ENCODE measurements at regions of chr19 and their contacts with region 1.

Region 1: DNA sequence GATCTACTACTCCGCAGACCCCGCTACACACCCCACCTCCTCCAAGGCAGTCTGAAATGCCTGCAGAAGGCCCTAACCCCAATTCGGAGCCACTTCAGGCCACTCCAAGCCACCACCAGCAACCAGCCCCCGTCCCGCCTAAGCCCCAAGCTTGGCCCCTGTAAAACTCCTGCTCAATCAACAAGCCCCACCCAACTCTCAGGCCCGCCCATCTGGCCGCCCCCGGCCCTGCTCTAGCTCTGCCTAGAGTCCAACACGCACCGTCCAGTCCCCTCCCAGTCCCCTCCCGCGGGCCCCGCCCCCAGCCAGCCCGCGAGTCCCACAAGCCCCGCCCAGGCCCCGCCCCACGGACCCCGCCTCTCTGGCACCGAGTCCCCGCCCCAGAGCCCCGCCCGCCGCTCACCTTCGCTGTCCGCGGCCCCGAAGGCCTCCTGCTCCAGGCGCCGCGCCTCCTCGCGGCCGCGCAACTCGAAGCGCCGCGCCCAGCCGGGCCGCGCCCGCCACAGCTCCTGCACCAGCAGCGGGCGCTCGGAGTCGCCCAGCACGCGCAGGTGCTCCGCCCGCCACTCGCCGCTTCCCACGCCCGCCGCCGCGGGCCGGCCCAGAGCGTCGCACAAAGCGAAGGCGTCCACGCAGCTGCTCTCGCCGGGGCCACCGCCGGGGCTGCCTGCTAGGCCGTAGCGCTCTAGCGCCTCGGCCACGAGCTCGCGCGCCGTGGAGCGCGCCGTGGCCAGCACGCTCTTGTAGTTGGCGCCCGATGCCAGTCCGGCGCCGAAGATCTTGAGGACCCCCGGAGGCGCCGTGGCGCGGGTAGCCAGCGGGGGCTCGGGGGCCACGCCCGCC is 1.6 kb downstream of the RASIP1 start:
- DNase-seq: peak; percentile 99
- ATAC-seq: peak; percentile 96
- H3K4me3 Mint-ChIP-seq: peak overlapping the region; percentile 51
- H3K27ac Mint-ChIP-seq: peak overlapping the region; percentile 51
- H3K4me1 Mint-ChIP-seq: peaks cover 17% of the 10 kb centered on the region
- H3K27me3 Mint-ChIP-seq: peaks cover 3% of the 10 kb centered on the region

Region 2: DNA sequence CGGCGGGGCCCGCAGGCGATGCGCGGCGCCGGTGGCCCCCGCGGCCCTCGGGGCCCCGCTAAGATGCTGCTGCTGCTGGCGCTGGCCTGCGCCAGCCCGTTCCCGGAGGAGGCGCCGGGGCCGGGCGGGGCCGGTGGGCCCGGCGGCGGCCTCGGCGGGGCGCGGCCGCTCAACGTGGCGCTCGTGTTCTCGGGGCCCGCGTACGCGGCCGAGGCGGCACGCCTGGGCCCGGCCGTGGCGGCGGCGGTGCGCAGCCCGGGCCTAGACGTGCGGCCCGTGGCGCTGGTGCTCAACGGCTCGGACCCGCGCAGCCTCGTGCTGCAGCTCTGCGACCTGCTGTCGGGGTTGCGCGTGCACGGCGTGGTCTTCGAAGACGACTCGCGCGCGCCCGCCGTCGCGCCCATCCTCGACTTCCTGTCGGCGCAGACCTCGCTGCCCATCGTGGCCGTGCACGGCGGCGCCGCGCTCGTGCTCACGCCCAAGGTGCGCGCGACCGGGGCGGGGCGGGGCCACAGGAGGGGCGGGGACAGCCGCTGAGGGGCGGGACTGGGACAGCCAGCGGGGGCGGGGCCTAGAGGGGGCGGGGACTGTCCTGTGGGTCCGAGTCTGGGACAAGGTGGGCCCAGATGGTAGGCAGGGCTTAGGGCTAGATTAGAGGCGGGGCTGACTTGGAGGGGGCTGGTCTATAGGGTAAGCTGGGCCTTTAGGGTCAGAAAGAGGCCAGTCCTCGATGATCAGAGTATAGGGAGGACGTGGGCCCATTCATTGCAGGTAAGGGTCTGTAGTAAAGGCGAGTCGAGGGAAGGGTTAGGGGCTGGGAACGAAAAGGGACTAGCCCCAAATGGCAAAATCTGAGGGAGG is 340.2 kb before region 1 on chr19:
- CTCF ChIA-PET with region 1: no interaction called
- POLR2A ChIA-PET with region 1: no interaction called
- intact Hi-C with region 1: loop called in 1 of 2 experiments (anchors 2 kb)
- DNase-seq: peak; percentile 94
- ATAC-seq: peak; percentile 68
- H3K4me3 Mint-ChIP-seq: peak overlapping the region; percentile 83
- H3K27ac Mint-ChIP-seq: no peak overlapping the region
- H3K4me1 Mint-ChIP-seq: peaks cover 29% of the 10 kb centered on the region
- H3K27me3 Mint-ChIP-seq: peaks cover 31% of the 10 kb centered on the region

Region 3: GRCh38 chr19:48646001-48646721 is 92.6 kb before region 1 on chr19 and contains the start of gene CA11:
- CTCF ChIA-PET with region 1: interaction called, 4 read pairs
- POLR2A ChIA-PET with region 1: no interaction called
- intact Hi-C with region 1: loop called in 1 of 2 experiments (anchors 1 kb)
- DNase-seq: peak; percentile 96
- ATAC-seq: peak; percentile 85
- H3K4me3 Mint-ChIP-seq: peak within 1 kb of the TSS; percentile 79
- H3K27ac Mint-ChIP-seq: peak within 1 kb of the TSS; percentile 88
- H3K4me1 Mint-ChIP-seq: peaks cover 44% of the 10 kb centered on the region
- H3K27me3 Mint-ChIP-seq: no peaks in the 10 kb centered on the region
- total RNA-seq, gene CA11: 11.5 to 18.0 TPM

Region 4: GRCh38 chr19:48720613-48721296 is 18.0 kb before region 1 on chr19:
- CTCF ChIA-PET with region 1: interaction called, 12 read pairs
- POLR2A ChIA-PET with region 1: interaction called, 4 read pairs
- intact Hi-C with region 1: loop called (anchors 1 to 2 kb)
- DNase-seq: peak; percentile 97
- ATAC-seq: peak; percentile 96
- H3K4me3 Mint-ChIP-seq: peak overlapping the region; percentile 80
- H3K27ac Mint-ChIP-seq: peak overlapping the region; percentile 97
- H3K4me1 Mint-ChIP-seq: peaks cover 14% of the 10 kb centered on the region
- H3K27me3 Mint-ChIP-seq: no peaks in the 10 kb centered on the region

Region 5: DNA sequence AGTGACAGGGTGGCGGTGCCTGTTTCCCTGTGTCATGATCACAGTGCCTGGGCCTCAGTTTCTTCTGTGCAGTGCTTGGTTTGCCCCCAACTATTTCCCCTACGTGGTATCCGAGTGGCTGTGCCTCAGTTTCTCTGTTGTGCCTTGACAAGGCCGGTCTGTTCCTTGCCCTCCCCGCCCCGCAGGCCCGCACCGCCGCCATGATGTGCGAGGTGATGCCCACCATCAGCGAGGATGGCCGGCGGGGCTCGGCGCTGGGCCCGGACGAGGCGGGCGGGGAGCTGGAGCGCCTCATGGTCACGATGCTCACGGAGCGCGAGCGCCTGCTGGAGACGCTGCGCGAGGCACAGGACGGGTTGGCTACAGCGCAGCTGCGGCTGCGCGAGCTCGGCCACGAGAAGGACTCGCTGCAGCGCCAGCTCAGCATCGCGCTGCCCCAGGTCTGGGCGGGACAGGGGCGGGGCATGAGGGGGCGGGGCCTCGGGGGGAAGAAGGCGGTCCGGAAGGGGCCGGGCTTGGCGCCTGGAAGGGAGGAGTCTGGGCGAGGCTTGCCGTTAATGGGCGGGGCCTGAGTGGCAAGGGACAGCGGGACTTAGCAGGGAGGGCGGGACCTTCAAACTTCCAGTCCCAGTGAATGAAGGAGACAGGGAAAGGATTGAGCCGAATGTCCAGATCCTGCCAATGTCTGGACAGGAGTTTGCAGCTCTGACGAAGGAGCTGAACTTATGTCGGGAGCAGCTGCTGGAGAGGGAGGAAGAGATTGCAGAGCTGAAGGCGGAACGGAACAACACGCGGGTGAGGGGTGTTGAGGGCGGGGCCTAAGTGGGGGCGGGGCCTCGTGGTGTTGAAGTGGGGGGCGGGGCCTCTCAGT is 389.1 kb after region 1 on chr19:
- CTCF ChIA-PET with region 1: no interaction called
- POLR2A ChIA-PET with region 1: no interaction called
- intact Hi-C with region 1: loop called in 1 of 2 experiments (anchors 2 kb)
- DNase-seq: peak; percentile 98
- ATAC-seq: peak; percentile 95
- H3K4me3 Mint-ChIP-seq: peak overlapping the region; percentile 76
- H3K27ac Mint-ChIP-seq: peak overlapping the region; percentile 92
- H3K4me1 Mint-ChIP-seq: peaks cover 11% of the 10 kb centered on the region
- H3K27me3 Mint-ChIP-seq: no peaks in the 10 kb centered on the region